PC-9 (cell line): ENCODE measurements at regions of chr1 and their contacts with region 1.

Region 1: DNA sequence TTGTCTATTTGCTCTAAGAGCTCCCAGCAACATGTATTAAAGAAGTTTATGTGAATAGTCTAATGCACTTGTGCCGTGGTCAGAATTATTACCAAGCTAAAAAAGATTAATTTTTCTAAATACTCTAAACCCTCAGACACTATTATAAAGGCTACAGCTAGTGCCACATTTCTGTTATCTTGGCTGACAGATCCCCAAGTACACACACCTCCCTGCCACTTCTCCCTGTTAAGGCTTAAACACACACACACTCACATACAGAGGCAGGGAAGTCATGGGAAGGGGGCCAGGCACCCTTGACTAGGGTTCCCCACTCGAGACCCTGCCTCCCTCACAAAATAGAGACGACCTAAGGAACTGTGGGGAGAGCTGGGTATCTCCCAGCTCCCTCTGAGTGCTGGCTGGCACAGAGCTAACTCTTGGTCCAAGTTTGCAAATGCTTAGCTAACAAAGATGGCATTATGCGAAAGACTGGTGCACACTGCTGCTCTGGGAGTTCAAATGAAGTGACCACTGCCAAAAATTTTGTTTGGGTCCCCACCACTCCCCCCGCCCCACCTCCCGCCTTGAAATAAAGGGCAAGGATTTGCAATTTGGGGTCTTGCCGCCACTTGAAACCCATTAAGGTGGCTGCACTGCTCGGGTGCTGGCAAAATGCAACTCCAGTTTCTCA is 9.8 kb downstream of the SSBP3 start:
- DNase-seq: no peak
- H3K4me3 ChIP-seq: no peak overlapping the region
- H3K27ac ChIP-seq: no peak overlapping the region
- H3K4me1 ChIP-seq: no peaks in the 10 kb centered on the region
- H3K27me3 ChIP-seq: no peaks in the 10 kb centered on the region
- CTCF ChIP-seq: no peak

Region 2: DNA sequence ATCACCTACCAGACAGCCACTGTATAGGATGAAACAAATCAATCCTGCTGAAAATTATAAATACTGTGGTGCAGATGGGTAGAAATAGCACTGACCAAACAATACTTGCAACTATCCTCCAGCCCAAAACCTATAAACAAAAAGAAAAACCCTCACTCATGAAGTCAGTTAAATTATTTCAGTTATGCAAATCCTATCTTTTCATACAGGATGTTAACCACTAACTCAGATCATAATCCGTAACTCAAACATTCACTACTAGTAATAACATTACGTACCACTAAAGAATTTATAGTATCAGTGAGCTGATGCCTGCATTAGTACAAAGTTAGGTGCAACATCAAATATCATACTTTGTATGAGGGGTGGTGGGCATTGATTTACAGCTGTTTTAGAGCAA is 560.9 kb before region 1 on chr1:
- CTCF ChIA-PET with region 1: no interaction called
- POLR2A ChIA-PET with region 1: no interaction called
- intact Hi-C with region 1: no loop called
- DNase-seq: no peak
- H3K4me3 ChIP-seq: no peak overlapping the region; the same call in 1 of the 2 replicates
- H3K27ac ChIP-seq: no peak overlapping the region
- H3K4me1 ChIP-seq: peaks cover 16% of the 10 kb centered on the region
- H3K27me3 ChIP-seq: no peaks in the 10 kb centered on the region
- CTCF ChIP-seq: no peak

Region 3: GRCh38 chr1:54142146-54142900 is 254.1 kb before region 1 on chr1:
- CTCF ChIA-PET with region 1: no interaction called
- POLR2A ChIA-PET with region 1: no interaction called
- intact Hi-C with region 1: no loop called
- DNase-seq: no peak
- H3K4me3 ChIP-seq: no peak overlapping the region
- H3K27ac ChIP-seq: no peak overlapping the region
- H3K4me1 ChIP-seq: no peaks in the 10 kb centered on the region
- H3K27me3 ChIP-seq: no peaks in the 10 kb centered on the region
- CTCF ChIP-seq: no peak

Region 4: GRCh38 chr1:54335755-54336108 is 60.7 kb before region 1 on chr1:
- CTCF ChIA-PET with region 1: no interaction called
- POLR2A ChIA-PET with region 1: interaction called, 12 read pairs
- intact Hi-C with region 1: no loop called
- DNase-seq: no peak
- H3K4me3 ChIP-seq: no peak overlapping the region
- H3K27ac ChIP-seq: no peak overlapping the region
- H3K4me1 ChIP-seq: no peaks in the 10 kb centered on the region
- H3K27me3 ChIP-seq: no peaks in the 10 kb centered on the region
- CTCF ChIP-seq: no peak

Region 5: GRCh38 chr1:54371037-54371941 is 25.1 kb before region 1 on chr1:
- CTCF ChIA-PET with region 1: no interaction called
- POLR2A ChIA-PET with region 1: interaction called, 25 read pairs
- intact Hi-C with region 1: no loop called
- DNase-seq: no peak
- H3K4me3 ChIP-seq: no peak overlapping the region
- H3K27ac ChIP-seq: no peak overlapping the region
- H3K4me1 ChIP-seq: no peaks in the 10 kb centered on the region
- H3K27me3 ChIP-seq: no peaks in the 10 kb centered on the region
- CTCF ChIP-seq: no peak

Region 6: DNA sequence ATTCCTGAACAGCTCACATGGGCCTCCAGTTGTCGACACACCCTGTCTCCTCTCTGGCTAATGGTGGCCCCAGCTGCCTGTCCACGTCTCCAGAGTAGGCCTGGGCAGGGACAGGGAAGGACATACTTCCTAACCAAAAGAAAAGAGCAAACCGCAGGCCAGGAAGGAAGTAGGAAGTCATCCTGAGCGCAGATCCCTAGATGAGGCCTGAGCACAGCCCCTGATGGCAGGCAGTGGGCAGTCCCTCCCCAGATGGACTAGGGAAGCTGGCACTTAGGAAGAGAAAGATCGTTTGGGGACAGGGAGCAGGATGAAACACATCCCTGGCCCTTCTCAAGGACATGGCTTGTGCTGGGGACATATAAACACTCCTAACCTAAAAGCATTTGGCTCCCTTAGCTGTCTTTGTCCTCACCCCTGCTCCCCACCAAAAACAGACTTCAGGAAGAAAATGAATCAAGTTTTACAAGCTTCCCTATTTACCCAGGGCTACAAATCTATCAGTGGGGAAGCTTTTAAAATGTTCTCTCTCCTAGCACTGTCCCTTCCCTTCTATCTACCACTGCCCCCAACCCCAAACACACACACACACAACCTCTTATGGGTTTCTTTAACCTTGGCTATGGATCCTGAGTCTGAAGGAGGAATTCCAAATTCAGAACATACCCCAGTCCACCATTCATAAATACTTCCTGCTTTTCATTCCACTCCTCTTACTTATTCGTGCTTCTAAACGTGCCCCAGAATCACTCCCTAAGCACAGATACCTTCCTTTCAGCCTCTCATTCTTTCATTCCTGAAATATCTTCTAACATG is 11.3 kb before region 1 on chr1:
- CTCF ChIA-PET with region 1: no interaction called
- POLR2A ChIA-PET with region 1: no interaction called
- intact Hi-C with region 1: no loop called
- DNase-seq: no peak
- H3K4me3 ChIP-seq: no peak overlapping the region
- H3K27ac ChIP-seq: no peak overlapping the region
- H3K4me1 ChIP-seq: no peaks in the 10 kb centered on the region
- H3K27me3 ChIP-seq: no peaks in the 10 kb centered on the region
- CTCF ChIP-seq: no peak

Region 7: DNA sequence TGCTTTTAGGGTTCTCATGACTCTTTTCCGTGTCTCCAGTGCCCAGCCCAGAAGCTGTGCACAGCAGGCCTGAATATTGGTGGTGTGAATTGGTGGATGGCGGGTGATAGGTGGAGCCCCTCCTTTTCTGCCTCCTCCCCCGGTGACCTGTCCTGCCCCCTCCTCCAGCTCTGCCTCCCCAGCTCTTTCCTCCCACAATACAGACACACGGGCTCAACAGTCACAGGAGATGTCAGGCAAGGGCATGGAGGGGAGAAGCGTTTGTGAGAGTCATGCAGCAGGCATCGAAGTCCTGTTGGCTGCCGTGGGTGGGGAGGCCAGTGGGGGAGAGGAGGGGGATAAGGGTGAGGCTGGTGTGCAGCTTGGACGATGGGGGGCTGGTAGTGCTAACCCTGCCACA is 301.9 kb after region 1 on chr1:
- CTCF ChIA-PET with region 1: no interaction called
- POLR2A ChIA-PET with region 1: no interaction called
- intact Hi-C with region 1: no loop called
- DNase-seq: no peak
- H3K4me3 ChIP-seq: no peak overlapping the region
- H3K27ac ChIP-seq: no peak overlapping the region
- H3K4me1 ChIP-seq: no peaks in the 10 kb centered on the region
- H3K27me3 ChIP-seq: peaks cover 62% of the 10 kb centered on the region
- CTCF ChIP-seq: no peak